ENCODE measurements at regions of chr6 and their contacts with region 1.

Region 1: GRCh38 chr6:20401205-20402091 is at the start of gene E2F3:
- DNase-seq: peak; percentile 93 to 99 (median 99)
- ATAC-seq: peak; percentile 90
- H3K4me3 ChIP-seq: peak within 1 kb of the TSS; percentile 89
- H3K4me3 Mint-ChIP-seq: peak within 1 kb of the TSS; percentile 90 to 98 (median 93)
- H3K27ac ChIP-seq: peak within 1 kb of the TSS; percentile 75
- H3K27ac Mint-ChIP-seq: peak within 1 kb of the TSS; percentile 74 to 95 (median 83)
- H3K4me1 ChIP-seq: peaks cover 4 to 27% of the 10 kb centered on the region in 2 donors
- H3K4me1 Mint-ChIP-seq: peaks cover 18 to 50% (median 33%) of the 10 kb centered on the region in 7 donors
- H3K27me3 ChIP-seq: no peaks in the 10 kb centered on the region
- H3K27me3 Mint-ChIP-seq: peaks cover 0 to 3% (median 0%) of the 10 kb centered on the region in 5 donors
- total RNA-seq, gene E2F3: 5.1 to 39.2 (median 30.8) TPM

Region 2: GRCh38 chr6:20212392-20213217 is 188.8 kb before region 1 on chr6 and contains the start of gene MBOAT1:
- CTCF ChIA-PET with region 1: no interaction called
- POLR2A ChIA-PET with region 1: no interaction called
- intact Hi-C with region 1: loop called (anchors 1 kb)
- DNase-seq: peak; percentile 38 to 85 (median 54)
- ATAC-seq: peak; percentile 82
- H3K4me3 ChIP-seq: peak within 1 kb of the TSS; percentile 73
- H3K4me3 Mint-ChIP-seq: peak within 1 kb of the TSS; percentile 82 to 99 (median 96)
- H3K27ac ChIP-seq: peak within 1 kb of the TSS; percentile 62
- H3K27ac Mint-ChIP-seq: peak within 1 kb of the TSS; percentile 56 to 94 (median 91)
- H3K4me1 ChIP-seq: peaks cover 11 to 20% of the 10 kb centered on the region in 2 donors
- H3K4me1 Mint-ChIP-seq: peaks cover 18 to 41% (median 27%) of the 10 kb centered on the region in 7 donors
- H3K27me3 ChIP-seq: no peaks in the 10 kb centered on the region
- H3K27me3 Mint-ChIP-seq: peaks cover 0 to 5% (median 0%) of the 10 kb centered on the region in 5 donors
- total RNA-seq, gene MBOAT1: 6.2 to 24.7 (median 10.0) TPM

Region 3: DNA sequence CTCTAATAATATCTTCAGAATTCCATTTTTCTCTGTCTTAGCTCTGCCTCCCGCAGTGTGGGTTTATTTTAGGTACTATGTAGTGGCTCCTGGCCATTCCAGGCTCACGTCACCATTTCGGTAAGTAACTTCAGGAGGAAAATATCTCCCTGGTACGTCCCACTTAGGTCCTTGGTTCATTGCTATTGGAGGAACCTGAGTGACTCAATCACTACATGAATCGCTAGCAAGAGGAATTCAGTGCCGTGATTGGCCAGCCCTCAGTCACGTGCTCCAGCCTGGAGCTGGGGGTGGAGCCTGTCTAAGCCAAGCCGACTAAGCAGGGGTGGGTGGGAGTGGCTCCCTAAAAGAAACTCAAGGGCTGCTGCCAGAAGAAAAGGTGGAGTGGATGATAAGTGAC is 67.1 kb before region 1 on chr6:
- CTCF ChIA-PET with region 1: interaction called, 10 read pairs
- POLR2A ChIA-PET with region 1: interaction called, 18 read pairs
- intact Hi-C with region 1: loop called (anchors 1 kb)
- DNase-seq: no peak
- ATAC-seq: no peak
- H3K4me3 ChIP-seq: no peak overlapping the region
- H3K4me3 Mint-ChIP-seq: no peak overlapping the region
- H3K27ac ChIP-seq: no peak overlapping the region
- H3K27ac Mint-ChIP-seq: no peak overlapping the region
- H3K4me1 ChIP-seq: peaks cover 0 to 11% of the 10 kb centered on the region in 2 donors
- H3K4me1 Mint-ChIP-seq: peaks cover 12 to 39% (median 33%) of the 10 kb centered on the region in 7 donors
- H3K27me3 ChIP-seq: no peaks in the 10 kb centered on the region
- H3K27me3 Mint-ChIP-seq: peaks cover 0 to 12% (median 0%) of the 10 kb centered on the region in 5 donors

Region 4: DNA sequence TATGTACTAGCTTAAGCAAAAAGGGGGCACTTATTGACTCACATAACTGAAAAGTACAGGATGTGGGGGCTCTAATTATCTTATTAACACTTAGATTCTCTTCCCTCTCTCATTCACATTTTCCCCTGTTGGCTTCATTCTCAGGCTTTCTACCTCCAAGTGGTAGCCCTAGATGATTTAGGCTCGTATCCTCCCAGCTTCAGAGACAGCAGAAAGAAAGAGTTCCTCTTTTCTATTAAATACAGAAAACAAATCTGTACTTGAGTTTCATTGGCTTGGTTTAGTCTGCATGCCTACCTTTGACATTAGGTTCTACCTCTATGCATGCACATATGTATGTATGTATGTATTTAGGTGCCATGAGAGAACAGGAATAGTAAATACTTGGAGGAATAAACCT is 15.2 kb before region 1 on chr6:
- CTCF ChIA-PET with region 1: interaction called, 3 read pairs
- POLR2A ChIA-PET with region 1: interaction called, 4 read pairs
- intact Hi-C with region 1: loop called in 1 of 2 experiments (anchors 1 kb)
- DNase-seq: no peak
- ATAC-seq: no peak
- H3K4me3 ChIP-seq: no peak overlapping the region
- H3K4me3 Mint-ChIP-seq: no peak overlapping the region
- H3K27ac ChIP-seq: no peak overlapping the region
- H3K27ac Mint-ChIP-seq: no peak overlapping the region
- H3K4me1 ChIP-seq: no peaks in the 10 kb centered on the region
- H3K4me1 Mint-ChIP-seq: peaks cover 0 to 7% (median 4%) of the 10 kb centered on the region in 7 donors
- H3K27me3 ChIP-seq: no peaks in the 10 kb centered on the region
- H3K27me3 Mint-ChIP-seq: peaks cover 0 to 8% (median 0%) of the 10 kb centered on the region in 5 donors

Region 5: DNA sequence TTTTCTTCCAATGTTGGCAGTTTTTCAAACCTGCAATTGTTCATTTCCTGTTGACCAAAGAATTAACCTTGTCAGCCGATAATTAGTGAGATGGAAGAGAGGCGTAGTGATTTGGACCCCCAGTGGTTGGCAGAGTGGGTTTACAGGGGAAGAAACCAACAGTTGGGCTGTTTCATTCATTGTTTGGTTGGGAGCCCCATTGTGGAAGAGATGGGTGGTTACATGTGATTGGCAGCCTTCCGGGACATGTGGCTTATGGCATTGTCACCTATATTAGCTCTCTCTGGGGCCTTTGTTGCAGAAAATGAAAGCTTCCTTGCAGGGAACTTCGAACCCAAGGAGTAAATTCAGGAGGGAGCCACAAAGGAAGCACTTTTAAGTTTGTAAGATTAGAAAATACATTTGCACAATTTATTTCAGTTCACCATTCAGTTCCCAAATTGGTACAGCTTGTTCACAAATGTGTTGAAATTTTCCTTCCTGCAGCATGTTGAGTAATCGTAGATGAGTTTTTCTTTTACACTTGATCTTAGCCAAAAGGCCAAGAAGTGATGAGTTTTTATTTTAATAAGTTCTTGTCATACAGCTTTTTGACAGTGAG is 82.5 kb after region 1 on chr6:
- CTCF ChIA-PET with region 1: no interaction called
- POLR2A ChIA-PET with region 1: no interaction called
- intact Hi-C with region 1: loop called in 1 of 2 experiments (anchors 10 kb)
- DNase-seq: no peak
- ATAC-seq: no peak
- H3K4me3 ChIP-seq: no peak overlapping the region
- H3K4me3 Mint-ChIP-seq: no peak overlapping the region
- H3K27ac ChIP-seq: no peak overlapping the region
- H3K27ac Mint-ChIP-seq: peak overlapping the region in 1 of 9 donors; percentile 11
- H3K4me1 ChIP-seq: no peaks in the 10 kb centered on the region
- H3K4me1 Mint-ChIP-seq: peaks cover 0 to 9% (median 0%) of the 10 kb centered on the region in 7 donors
- H3K27me3 ChIP-seq: no peaks in the 10 kb centered on the region
- H3K27me3 Mint-ChIP-seq: no peaks in the 10 kb centered on the region

Measured in naive thymus-derived CD4-positive, alpha-beta T cell (primary cell).